GM12878 (cell line): ENCODE measurements at regions of chr3 and their contacts with region 1.

Region 1: GRCh38 chr3:156681002-156681401 is 6.6 kb downstream of the TIPARP start:
- DNase-seq: no peak
- ATAC-seq: peak; percentile 76
- H3K4me3 ChIP-seq: peak overlapping the region; percentile 44
- H3K27ac ChIP-seq: peak overlapping the region; percentile 40
- H3K4me1 ChIP-seq: peaks cover 36% of the 10 kb centered on the region
- H3K27me3 ChIP-seq: no peaks in the 10 kb centered on the region
- CTCF ChIP-seq: no peak
- EP300 ChIP-seq: peak; percentile 33 to 90; a peak in 1 of 4 replicates
- POLR2A ChIP-seq: no peak
- RAD21 ChIP-seq: no peak

Region 2: DNA sequence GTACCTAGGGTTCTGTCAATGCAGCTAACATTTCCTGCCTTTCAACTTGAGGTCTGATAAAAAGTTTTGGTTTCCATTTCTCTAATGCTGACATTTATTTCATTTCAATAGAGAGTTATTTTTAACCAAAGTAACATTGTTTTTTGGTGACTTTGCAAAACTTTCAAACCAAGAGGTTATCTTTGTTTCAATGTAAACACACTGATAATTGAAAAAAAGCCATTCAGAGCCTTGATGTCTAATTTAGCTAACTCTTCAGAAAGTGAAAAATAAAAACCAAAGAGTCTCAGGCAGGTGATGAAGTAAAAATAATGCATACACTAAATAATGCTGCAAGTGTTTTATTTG is 16.2 kb before region 1 on chr3:
- CTCF ChIA-PET with region 1: interaction called, 7 read pairs
- POLR2A ChIA-PET with region 1: no interaction called
- RAD21 ChIA-PET with region 1: interaction called, 29 read pairs
- SMC1A ChIA-PET with region 1: interaction called, 52 read pairs
- in situ Hi-C with region 1: no loop called
- intact Hi-C with region 1: no loop called
- DNase-seq: no peak
- ATAC-seq: peak; percentile 78
- H3K4me3 ChIP-seq: no peak overlapping the region
- H3K27ac ChIP-seq: peak overlapping the region; percentile 97
- H3K4me1 ChIP-seq: peaks cover 55% of the 10 kb centered on the region
- H3K27me3 ChIP-seq: no peaks in the 10 kb centered on the region
- CTCF ChIP-seq: no peak
- EP300 ChIP-seq: peak; percentile 69 to 92; a peak in 3 of 4 replicates
- POLR2A ChIP-seq: no peak
- RAD21 ChIP-seq: no peak

Region 3: GRCh38 chr3:156702367-156702766 is 21.4 kb after region 1 on chr3:
- CTCF ChIA-PET with region 1: interaction called, 7 read pairs
- POLR2A ChIA-PET with region 1: interaction called, 8 read pairs
- RAD21 ChIA-PET with region 1: interaction called, 5 read pairs
- SMC1A ChIA-PET with region 1: interaction called, 28 read pairs
- in situ Hi-C with region 1: no loop called
- intact Hi-C with region 1: no loop called
- DNase-seq: no peak
- ATAC-seq: no peak
- H3K4me3 ChIP-seq: no peak overlapping the region
- H3K27ac ChIP-seq: no peak overlapping the region
- H3K4me1 ChIP-seq: peaks cover 10% of the 10 kb centered on the region; the same call in 1 of the 2 replicates
- H3K27me3 ChIP-seq: no peaks in the 10 kb centered on the region
- CTCF ChIP-seq: no peak
- EP300 ChIP-seq: no peak
- POLR2A ChIP-seq: no peak
- RAD21 ChIP-seq: no peak

Region 4: DNA sequence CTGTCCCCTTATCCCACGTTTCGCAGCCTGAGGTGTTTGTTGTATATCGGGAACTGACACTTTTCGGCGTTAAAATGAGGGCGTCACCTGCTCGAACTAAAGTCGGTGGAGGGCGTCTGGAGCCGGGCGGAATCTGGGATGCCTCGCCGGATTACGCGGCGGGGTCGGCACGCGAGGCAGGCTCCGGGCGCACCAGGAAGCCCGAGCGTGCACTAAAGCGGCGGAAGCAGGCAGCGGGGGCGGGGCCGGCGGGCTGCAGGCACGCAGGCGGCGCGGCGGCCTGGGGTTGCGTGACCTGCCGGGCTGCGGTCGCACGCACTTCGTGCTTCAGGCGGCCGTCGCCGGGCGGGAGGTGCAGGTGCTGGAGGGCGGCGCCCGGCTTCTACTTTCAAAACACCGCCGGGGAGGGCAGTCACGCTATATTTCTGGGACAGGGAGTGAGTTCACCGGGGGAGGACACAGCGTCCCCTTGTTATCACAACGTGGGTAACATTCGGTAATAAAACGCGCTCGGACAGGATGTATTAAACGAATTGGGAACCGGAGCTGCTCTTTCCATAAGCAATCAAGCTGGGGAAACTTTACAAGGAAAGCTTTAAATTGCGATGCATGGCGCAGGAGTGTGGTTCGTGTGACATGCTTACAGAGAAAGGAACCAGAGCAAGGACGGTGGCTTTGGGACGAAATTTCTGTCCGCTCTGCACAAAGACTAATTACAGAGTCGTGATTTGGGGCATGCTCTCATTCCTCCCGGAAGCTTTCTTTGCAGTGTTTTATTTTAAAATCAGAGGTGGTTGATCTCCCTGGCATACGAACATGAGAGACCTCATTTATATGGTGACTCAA is 136.0 kb after region 1 on chr3:
- CTCF ChIA-PET with region 1: interaction called, 3 read pairs
- POLR2A ChIA-PET with region 1: interaction called, 5 read pairs
- RAD21 ChIA-PET with region 1: interaction called, 12 read pairs
- SMC1A ChIA-PET with region 1: interaction called, 9 read pairs
- in situ Hi-C with region 1: loop called (anchors 5 kb)
- intact Hi-C with region 1: no loop called
- DNase-seq: peak; percentile 55
- ATAC-seq: peak; percentile 78
- H3K4me3 ChIP-seq: peak overlapping the region; percentile 85
- H3K27ac ChIP-seq: peak overlapping the region; percentile 95
- H3K4me1 ChIP-seq: peaks cover 27% of the 10 kb centered on the region
- H3K27me3 ChIP-seq: no peaks in the 10 kb centered on the region
- CTCF ChIP-seq: peak; percentile 11 to 34 (median 21); a peak in 3 of 6 replicates
- EP300 ChIP-seq: peak; percentile 99 to 100
- POLR2A ChIP-seq: peak; percentile 94
- RAD21 ChIP-seq: peak; percentile 30